ENCODE measurements at regions of chr11 and their contacts with region 1.

Region 1: GRCh38 chr11:103682318-103683184 is 353.9 kb upstream of the DDI1 start:
- DNase-seq: peak in 4 of 5 donors; percentile 54 to 66 (median 58)
- ATAC-seq: peak; percentile 90 to 98 (median 96)
- H3K4me3 ChIP-seq: peak overlapping the region in 1 of 12 donors; percentile 15
- H3K27ac ChIP-seq: peak overlapping the region in 7 of 12 donors; percentile 3 to 60 (median 49)
- H3K4me1 ChIP-seq: peaks cover 0 to 15% (median 6%) of the 10 kb centered on the region in 12 donors
- H3K27me3 ChIP-seq: no peaks in the 10 kb centered on the region
- CTCF ChIP-seq: peak; percentile 65 to 92 (median 84)
- POLR2A ChIP-seq: no peak

Region 2: GRCh38 chr11:103744496-103745153 is 62.1 kb after region 1 on chr11:
- intact Hi-C with region 1: no loop called
- DNase-seq: no peak
- ATAC-seq: no peak
- H3K4me3 ChIP-seq: no peak overlapping the region
- H3K27ac ChIP-seq: no peak overlapping the region
- H3K4me1 ChIP-seq: peaks cover 0 to 5% (median 0%) of the 10 kb centered on the region in 12 donors
- H3K27me3 ChIP-seq: no peaks in the 10 kb centered on the region
- CTCF ChIP-seq: no peak
- POLR2A ChIP-seq: no peak

Region 3: GRCh38 chr11:103798026-103798425 is 115.5 kb after region 1 on chr11:
- intact Hi-C with region 1: loop called in 2 of 10 experiments (anchors 10 kb)
- DNase-seq: peak in 2 of 5 donors; percentile 27 to 37
- ATAC-seq: peak; percentile 49 to 72 (median 64)
- H3K4me3 ChIP-seq: no peak overlapping the region
- H3K27ac ChIP-seq: peak overlapping the region in 8 of 12 donors; percentile 15 to 76 (median 66)
- H3K4me1 ChIP-seq: peaks cover 0 to 54% (median 12%) of the 10 kb centered on the region in 12 donors
- H3K27me3 ChIP-seq: no peaks in the 10 kb centered on the region
- CTCF ChIP-seq: no peak
- POLR2A ChIP-seq: no peak

Region 4: GRCh38 chr11:104151404-104152204 is 469.1 kb after region 1 on chr11:
- intact Hi-C with region 1: loop called (anchors 2 to 5 kb)
- DNase-seq: no peak
- ATAC-seq: no peak
- H3K4me3 ChIP-seq: no peak overlapping the region
- H3K27ac ChIP-seq: no peak overlapping the region
- H3K4me1 ChIP-seq: peaks cover 0 to 7% (median 0%) of the 10 kb centered on the region in 12 donors
- H3K27me3 ChIP-seq: no peaks in the 10 kb centered on the region
- CTCF ChIP-seq: peak; percentile 17 to 56 (median 42)
- POLR2A ChIP-seq: no peak

Measured in heart left ventricle (tissue), 16 donors.